Heart left ventricle (tissue), 16 donors: ENCODE measurements at regions of chr16 and their contacts with region 1.

Region 1: DNA sequence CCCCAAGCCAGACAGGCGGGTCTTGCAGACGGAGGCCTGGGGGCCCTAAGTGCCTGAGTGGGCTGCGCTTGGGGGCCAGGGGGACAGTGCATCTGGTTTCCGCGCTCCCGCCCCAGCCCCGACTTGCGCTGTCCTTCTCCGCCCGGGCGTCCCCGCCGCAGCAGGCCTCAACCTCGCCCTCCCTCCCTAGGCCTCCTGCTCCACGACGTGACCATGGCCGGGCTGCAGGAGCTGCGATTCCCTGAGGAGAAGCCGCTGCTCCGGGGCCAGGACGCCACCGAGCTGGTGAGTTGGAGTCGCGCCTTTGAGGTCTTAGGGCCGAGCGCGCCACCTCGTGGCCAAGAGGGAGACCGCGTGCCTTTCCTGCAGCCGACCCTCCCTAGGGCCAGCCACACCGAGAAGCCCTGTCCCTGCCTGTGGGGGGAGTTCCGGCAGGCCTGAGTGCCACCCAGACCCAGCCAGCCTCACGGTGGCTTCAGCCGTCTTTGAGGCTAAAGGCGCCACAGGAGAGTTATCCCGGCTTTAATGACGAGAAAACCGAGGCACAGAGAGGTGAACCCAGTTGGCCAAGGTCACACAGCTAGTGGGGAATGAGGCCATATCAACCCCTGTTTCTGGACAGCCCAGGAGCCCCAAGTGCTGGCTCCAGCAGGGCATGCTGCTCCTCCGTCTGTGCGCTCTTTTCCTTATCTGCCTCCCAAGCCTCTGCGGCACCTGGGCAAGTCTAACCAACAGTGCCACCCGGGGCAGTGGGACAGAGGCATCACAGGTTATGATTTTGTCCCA is 12.2 kb upstream of the NDRG4 start:
- DNase-seq: peak; percentile 87 to 94 (median 92)
- ATAC-seq: peak; percentile 44 to 82 (median 73)
- H3K4me3 ChIP-seq: peak overlapping the region in 9 of 12 donors; percentile 15 to 39 (median 28)
- H3K27ac ChIP-seq: peak overlapping the region; percentile 6 to 80 (median 68)
- H3K4me1 ChIP-seq: peaks cover 0 to 76% (median 35%) of the 10 kb centered on the region in 12 donors
- H3K27me3 ChIP-seq: no peaks in the 10 kb centered on the region
- CTCF ChIP-seq: peak; percentile 89 to 99 (median 94)
- POLR2A ChIP-seq: peak in 1 of 2 donors; percentile 16

Region 2: GRCh38 chr16:58129097-58129936 is 358.4 kb before region 1 on chr16 and contains the start of gene CFAP20:
- intact Hi-C with region 1: loop called in 1 of 10 experiments (anchors 10 kb)
- DNase-seq: peak; percentile 98 to 100 (median 99)
- ATAC-seq: peak; percentile 95 to 97 (median 97)
- H3K4me3 ChIP-seq: peak within 1 kb of the TSS; percentile 67 to 93 (median 85)
- H3K27ac ChIP-seq: peak within 1 kb of the TSS; percentile 37 to 95 (median 90)
- H3K4me1 ChIP-seq: peaks cover 0 to 50% (median 40%) of the 10 kb centered on the region in 12 donors
- H3K27me3 ChIP-seq: no peaks in the 10 kb centered on the region
- CTCF ChIP-seq: no peak
- POLR2A ChIP-seq: peak; percentile 76 to 97
- total RNA-seq, gene CFAP20: 30.7 to 57.5 (median 36.3) TPM

Region 3: DNA sequence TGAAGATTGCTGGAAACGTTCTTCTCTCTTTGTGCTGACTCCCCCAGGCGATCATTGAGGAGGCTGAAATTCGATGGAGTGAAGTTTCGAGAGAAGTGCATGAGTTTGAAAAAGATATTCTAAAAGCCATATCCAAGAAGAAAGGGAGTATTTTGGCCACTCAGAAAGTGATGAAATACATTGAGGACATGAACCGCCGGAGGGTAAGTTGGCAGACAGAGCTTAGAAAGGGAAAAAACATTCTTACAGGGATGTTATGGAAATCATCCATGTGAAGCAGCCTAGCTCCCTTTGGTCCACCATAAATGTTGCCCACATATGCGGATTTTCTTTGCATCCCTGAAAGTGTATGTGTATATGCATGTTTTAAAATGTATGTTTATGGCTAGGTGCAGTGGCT is 229.4 kb before region 1 on chr16:
- intact Hi-C with region 1: no loop called
- DNase-seq: no peak
- ATAC-seq: no peak
- H3K4me3 ChIP-seq: no peak overlapping the region
- H3K27ac ChIP-seq: no peak overlapping the region
- H3K4me1 ChIP-seq: no peaks in the 10 kb centered on the region
- H3K27me3 ChIP-seq: no peaks in the 10 kb centered on the region
- CTCF ChIP-seq: no peak
- POLR2A ChIP-seq: no peak

Region 4: GRCh38 chr16:58336332-58337089 is 151.2 kb before region 1 on chr16:
- intact Hi-C with region 1: loop called (anchors 1 to 2 kb)
- DNase-seq: peak; percentile 71 to 88 (median 82)
- ATAC-seq: peak; percentile 52 to 81 (median 78)
- H3K4me3 ChIP-seq: peak overlapping the region in 10 of 12 donors; percentile 20 to 53 (median 38)
- H3K27ac ChIP-seq: peak overlapping the region in 10 of 12 donors; percentile 23 to 77 (median 58)
- H3K4me1 ChIP-seq: peaks cover 0 to 39% (median 25%) of the 10 kb centered on the region in 12 donors
- H3K27me3 ChIP-seq: no peaks in the 10 kb centered on the region
- CTCF ChIP-seq: peak; percentile 89 to 98 (median 94)
- POLR2A ChIP-seq: no peak

Region 5: DNA sequence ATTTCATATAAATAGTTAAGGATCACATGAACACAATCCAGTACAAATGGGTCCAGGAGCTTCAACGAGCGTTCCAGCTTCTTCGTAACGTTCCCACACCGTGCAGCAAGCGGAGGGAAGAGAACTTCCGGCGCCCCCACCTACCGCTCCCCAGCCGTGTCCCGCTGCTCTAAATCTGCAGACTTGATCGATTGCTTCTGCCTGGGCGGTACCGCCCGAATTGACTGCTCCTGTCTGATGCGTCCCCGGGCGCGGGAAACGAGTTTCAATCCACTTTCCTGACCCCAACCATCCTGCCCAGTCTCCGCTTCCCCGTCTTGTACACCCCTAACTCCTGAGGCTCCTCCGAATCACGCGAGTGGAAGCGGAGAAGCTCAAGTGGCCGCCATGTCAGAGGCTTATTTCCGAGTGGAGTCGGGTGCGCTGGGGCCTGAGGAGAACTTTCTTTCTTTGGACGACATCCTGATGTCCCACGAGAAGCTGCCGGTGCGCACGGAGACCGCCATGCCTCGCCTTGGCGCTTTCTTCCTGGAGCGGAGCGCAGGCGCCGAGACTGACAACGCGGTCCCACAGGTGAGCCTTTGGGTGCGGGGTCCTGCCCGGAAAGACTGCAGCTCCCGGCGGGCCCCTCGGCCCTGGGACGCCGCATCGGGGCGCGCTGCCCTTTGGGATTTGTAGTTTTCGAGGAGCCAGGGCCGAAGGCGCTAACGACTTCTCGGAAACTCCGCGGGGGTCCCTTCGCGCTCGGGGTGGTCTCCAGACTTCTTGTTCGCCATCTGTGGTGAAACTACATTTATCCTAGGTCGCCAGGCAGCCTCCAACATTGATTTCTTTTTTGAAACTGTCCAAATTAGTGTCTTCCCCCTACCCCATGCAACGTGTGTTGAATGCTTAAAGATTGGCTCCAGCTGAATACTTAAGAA is 95.3 kb before region 1 on chr16 and contains the start of gene GINS3:
- intact Hi-C with region 1: loop called in 3 of 10 experiments (anchors 5 kb)
- DNase-seq: peak; percentile 92 to 94 (median 93)
- ATAC-seq: peak; percentile 94 to 99 (median 98)
- H3K4me3 ChIP-seq: peak within 1 kb of the TSS; percentile 66 to 96 (median 88)
- H3K27ac ChIP-seq: peak within 1 kb of the TSS; percentile 59 to 95 (median 87)
- H3K4me1 ChIP-seq: peaks cover 0 to 16% (median 9%) of the 10 kb centered on the region in 12 donors
- H3K27me3 ChIP-seq: no peaks in the 10 kb centered on the region
- CTCF ChIP-seq: no peak
- POLR2A ChIP-seq: peak in 1 of 2 donors; percentile 19
- total RNA-seq, gene GINS3: 3.9 to 8.7 (median 7.1) TPM

Region 6: GRCh38 chr16:58459344-58460218 is 28.2 kb before region 1 on chr16:
- intact Hi-C with region 1: loop called in 3 of 10 experiments (anchors 2 kb)
- DNase-seq: peak in 2 of 5 donors; percentile 33 to 72
- ATAC-seq: peak in 2 of 4 donors; percentile 22 to 36
- H3K4me3 ChIP-seq: no peak overlapping the region
- H3K27ac ChIP-seq: peak overlapping the region in 10 of 12 donors; percentile 32 to 99 (median 78)
- H3K4me1 ChIP-seq: peaks cover 0 to 38% (median 11%) of the 10 kb centered on the region in 12 donors
- H3K27me3 ChIP-seq: peaks cover 0 to 31% (median 0%) of the 10 kb centered on the region in 9 donors
- CTCF ChIP-seq: no peak
- POLR2A ChIP-seq: no peak

Region 7: DNA sequence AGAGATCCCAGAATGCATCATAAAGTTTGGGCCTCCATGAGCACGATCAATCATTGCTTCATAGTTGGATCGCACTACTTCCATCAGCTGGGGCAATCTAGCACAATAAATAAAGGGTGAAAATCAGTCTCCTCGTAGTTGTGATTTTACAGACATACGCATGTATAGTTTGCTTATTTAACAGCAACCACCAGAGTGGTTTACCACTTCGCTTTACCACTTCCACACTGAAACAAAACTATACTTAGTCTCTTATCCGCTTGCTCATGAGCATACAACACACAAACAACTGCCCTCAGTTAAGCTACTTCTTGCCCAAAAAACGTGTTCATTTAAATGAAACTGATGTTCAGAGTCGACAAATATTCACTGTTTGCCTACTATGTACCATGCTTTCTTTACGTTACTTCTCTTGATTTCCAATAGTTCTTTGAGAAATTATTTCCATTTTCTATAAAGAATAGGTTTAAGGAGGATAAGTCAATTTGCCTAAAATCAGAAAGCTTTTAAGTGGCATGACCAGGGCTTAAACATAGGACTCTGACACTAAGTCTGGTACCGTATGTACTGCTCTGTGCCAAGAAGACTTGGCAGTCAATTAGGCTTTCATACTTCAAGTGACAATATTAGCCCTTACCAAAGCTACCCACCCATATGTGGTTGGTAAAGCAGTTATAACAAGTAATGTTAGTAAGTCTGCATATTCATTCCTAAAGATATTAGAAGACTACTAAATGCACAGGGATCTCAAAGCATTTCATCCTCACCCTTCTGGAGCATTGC is 49.6 kb after region 1 on chr16:
- intact Hi-C with region 1: no loop called
- DNase-seq: no peak
- ATAC-seq: peak; percentile 44 to 84 (median 71)
- H3K4me3 ChIP-seq: no peak overlapping the region
- H3K27ac ChIP-seq: peak overlapping the region in 1 of 12 donors; percentile 2
- H3K4me1 ChIP-seq: peaks cover 0 to 36% (median 3%) of the 10 kb centered on the region in 12 donors
- H3K27me3 ChIP-seq: no peaks in the 10 kb centered on the region
- CTCF ChIP-seq: no peak
- POLR2A ChIP-seq: no peak